Activated T-helper 2 cell treated with anti-CD3 and anti-CD28 coated beads, Interferon-gamma antibody, Interleukin-2, Interleukin-4, amounts not matched to agents 10 μg/mL and 5 μg/mL and 100 μg/mL, durations not matched to agents 14 hours and 24 hours and 36 hours (primary cell): ENCODE measurements at regions of chr2 and their contacts with region 1.

Region 1: DNA sequence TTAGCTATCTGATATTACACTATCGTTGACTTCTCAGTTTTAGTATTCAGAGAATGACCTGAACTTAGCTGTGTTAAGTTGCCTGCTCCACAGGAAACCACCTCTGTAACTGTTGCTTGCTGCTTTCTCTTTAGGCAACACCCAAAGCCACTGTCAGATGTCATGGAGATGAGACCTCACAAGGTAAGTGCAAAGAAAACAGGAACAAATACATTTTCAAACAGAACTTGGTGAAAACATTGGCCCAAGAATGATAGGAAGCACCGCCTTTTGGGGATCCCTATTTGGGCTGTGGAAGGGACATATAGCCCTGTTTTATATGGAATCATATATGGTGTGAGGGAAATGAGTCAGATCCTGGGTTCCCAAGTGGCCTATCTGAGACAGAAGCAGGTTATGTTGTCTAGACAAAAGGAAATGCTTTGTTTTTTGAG is 143.4 kb downstream of the UBE2E3 start:
- DNase-seq: peak; percentile 74
- H3K4me3 Mint-ChIP-seq: peak overlapping the region; percentile 76
- H3K27ac Mint-ChIP-seq: peak overlapping the region; percentile 95
- H3K4me1 Mint-ChIP-seq: peaks cover 61% of the 10 kb centered on the region
- H3K27me3 Mint-ChIP-seq: no peaks in the 10 kb centered on the region

Region 2: GRCh38 chr2:181142514-181142913 is 18.7 kb after region 1 on chr2:
- intact Hi-C with region 1: loop called (anchors 1 kb)
- DNase-seq: no peak
- H3K4me3 Mint-ChIP-seq: peak overlapping the region; percentile 81
- H3K27ac Mint-ChIP-seq: peak overlapping the region; percentile 94
- H3K4me1 Mint-ChIP-seq: peaks cover 74% of the 10 kb centered on the region
- H3K27me3 Mint-ChIP-seq: no peaks in the 10 kb centered on the region

Region 3: DNA sequence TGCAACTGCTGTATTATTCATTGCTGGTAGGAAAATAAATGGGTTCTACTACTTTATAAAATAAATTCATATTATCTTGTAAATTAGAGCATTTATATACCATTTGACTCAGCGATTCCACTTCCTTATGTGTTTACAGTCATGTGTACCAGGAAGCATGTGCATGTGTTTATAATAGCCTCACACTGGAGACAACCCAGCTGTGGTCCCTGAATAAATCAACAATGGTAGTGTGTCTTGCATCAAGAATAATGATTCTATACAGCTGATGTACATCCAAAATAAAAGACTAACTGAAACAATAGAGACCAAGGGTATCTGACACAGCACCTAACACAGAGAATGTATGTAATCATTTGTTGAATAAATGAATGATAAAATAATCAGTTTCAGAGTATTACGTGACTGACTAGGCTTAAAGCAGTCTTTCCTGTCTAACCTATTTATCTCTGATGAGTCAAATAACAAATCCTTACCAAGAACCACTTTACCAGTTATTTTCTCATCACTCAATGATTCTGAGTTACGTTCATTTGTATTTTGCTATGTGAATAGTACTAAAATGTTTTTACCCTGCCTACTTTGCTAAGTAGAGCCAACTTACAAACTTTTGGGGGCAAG is 73.4 kb after region 1 on chr2:
- intact Hi-C with region 1: loop called (anchors 2 kb)
- DNase-seq: no peak
- H3K4me3 Mint-ChIP-seq: peak overlapping the region; percentile 37
- H3K27ac Mint-ChIP-seq: peak overlapping the region; percentile 80
- H3K4me1 Mint-ChIP-seq: peaks cover 47% of the 10 kb centered on the region
- H3K27me3 Mint-ChIP-seq: no peaks in the 10 kb centered on the region

Region 4: GRCh38 chr2:181239201-181239799 is 115.5 kb after region 1 on chr2:
- intact Hi-C with region 1: loop called (anchors 5 kb)
- DNase-seq: no peak
- H3K4me3 Mint-ChIP-seq: no peak overlapping the region
- H3K27ac Mint-ChIP-seq: no peak overlapping the region
- H3K4me1 Mint-ChIP-seq: peaks cover 76% of the 10 kb centered on the region
- H3K27me3 Mint-ChIP-seq: no peaks in the 10 kb centered on the region

Region 5: DNA sequence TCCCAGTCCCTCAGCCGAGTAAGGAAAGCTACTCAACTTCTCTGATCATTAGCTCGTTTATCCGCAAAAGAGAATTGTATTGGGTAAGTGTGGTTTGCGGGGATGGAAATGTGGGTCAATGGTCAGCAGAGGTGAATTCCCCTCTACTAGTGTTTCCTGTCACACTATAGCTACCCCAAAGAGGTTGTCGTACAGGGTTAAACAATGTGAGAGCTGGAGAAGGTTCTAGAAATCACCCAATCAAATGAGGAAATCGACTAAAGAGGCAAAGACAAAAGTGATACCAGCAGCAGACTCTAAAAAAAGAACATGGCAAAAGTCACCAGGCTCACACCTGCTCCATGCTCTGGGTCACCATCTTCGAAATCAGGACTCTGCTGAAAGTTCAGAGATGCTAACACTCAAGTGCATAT is 188.7 kb after region 1 on chr2:
- intact Hi-C with region 1: loop called (anchors 1 kb)
- DNase-seq: peak; percentile 34
- H3K4me3 Mint-ChIP-seq: peak overlapping the region; percentile 82
- H3K27ac Mint-ChIP-seq: peak overlapping the region; percentile 98
- H3K4me1 Mint-ChIP-seq: peaks cover 62% of the 10 kb centered on the region
- H3K27me3 Mint-ChIP-seq: no peaks in the 10 kb centered on the region